GM10248 (cell line): ENCODE measurements at regions of chr14 and their contacts with region 1.

Region 1: GRCh38 chr14:61025251-61026223 is 44.5 kb downstream of the SLC38A6 start:
- DNase-seq: peak; percentile 42
- CTCF ChIP-seq: peak; percentile 72

Region 2: DNA sequence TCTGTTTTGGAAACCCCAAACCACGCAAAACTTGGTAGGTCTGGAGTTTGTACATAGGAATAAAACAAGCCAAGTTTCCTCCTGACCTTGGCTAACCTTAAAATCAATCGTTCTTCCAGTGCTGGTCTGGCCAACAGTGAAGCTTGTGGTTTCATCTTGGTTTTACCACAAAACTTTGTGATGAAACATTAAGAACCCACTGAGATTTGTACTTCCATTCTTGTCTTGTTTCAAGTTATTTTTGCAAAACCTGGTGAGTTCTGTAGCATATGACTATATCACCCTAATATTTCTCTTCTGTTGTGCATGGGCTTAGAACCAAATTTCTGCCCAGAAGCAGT is 402.6 kb before region 1 on chr14:
- CTCF ChIA-PET with region 1: interaction called, 29 read pairs
- POLR2A ChIA-PET with region 1: no interaction called
- DNase-seq: no peak
- CTCF ChIP-seq: no peak

Region 3: DNA sequence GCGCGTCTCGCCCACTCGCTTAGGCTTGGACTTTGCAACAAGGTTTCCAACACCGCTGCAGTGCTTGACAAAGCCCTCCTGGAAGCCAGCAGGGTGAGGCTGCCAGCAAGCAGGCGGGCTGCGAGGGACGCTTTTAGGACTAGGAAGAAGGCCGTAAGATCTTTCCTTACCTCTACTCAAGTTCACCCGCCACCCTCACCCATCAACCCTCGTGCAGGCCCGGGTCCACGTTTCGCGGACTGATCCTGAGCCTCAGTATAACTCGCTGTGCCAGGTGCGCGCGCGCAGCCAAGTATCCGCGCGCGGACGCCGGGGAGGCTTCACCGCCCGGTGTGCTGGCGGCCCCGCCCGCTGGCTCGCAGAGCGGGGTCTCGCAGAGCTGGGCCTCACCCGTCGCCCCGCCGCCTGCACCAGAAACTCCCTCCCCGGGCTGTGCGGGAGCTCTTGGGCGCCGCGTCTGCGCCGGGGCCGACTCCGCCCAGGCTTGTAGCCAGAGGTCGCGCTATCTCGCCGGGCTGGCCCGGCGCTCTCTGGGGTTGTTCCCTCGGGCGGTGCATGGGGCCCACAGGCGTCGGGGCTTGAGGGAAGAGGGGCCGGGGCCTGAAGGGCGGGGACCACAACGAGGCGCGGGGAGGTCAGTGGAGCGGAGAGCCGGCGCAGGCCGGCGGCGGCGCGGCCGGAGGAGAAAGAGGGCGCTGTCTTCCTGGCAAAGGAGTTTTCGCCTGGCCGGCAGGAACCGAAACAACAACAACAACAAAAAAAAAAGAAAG is 368.7 kb before region 1 on chr14:
- CTCF ChIA-PET with region 1: interaction called, 13 read pairs
- POLR2A ChIA-PET with region 1: no interaction called
- DNase-seq: peak; percentile 83
- CTCF ChIP-seq: peak; percentile 65

Region 4: GRCh38 chr14:60999536-60999935 is 26.0 kb before region 1 on chr14:
- CTCF ChIA-PET with region 1: no interaction called
- POLR2A ChIA-PET with region 1: no interaction called
- DNase-seq: no peak
- CTCF ChIP-seq: no peak